ENCODE measurements at regions of chr3 and their contacts with region 1.

Region 1: GRCh38 chr3:120558771-120559241 is 37.3 kb upstream of the NDUFB4 start:
- DNase-seq: peak; percentile 84
- H3K4me3 Mint-ChIP-seq: peak overlapping the region; percentile 78
- H3K27ac Mint-ChIP-seq: peak overlapping the region; percentile 92
- H3K4me1 Mint-ChIP-seq: peaks cover 22% of the 10 kb centered on the region
- H3K27me3 Mint-ChIP-seq: no peaks in the 10 kb centered on the region
- CTCF ChIP-seq: peak; percentile 97

Region 2: DNA sequence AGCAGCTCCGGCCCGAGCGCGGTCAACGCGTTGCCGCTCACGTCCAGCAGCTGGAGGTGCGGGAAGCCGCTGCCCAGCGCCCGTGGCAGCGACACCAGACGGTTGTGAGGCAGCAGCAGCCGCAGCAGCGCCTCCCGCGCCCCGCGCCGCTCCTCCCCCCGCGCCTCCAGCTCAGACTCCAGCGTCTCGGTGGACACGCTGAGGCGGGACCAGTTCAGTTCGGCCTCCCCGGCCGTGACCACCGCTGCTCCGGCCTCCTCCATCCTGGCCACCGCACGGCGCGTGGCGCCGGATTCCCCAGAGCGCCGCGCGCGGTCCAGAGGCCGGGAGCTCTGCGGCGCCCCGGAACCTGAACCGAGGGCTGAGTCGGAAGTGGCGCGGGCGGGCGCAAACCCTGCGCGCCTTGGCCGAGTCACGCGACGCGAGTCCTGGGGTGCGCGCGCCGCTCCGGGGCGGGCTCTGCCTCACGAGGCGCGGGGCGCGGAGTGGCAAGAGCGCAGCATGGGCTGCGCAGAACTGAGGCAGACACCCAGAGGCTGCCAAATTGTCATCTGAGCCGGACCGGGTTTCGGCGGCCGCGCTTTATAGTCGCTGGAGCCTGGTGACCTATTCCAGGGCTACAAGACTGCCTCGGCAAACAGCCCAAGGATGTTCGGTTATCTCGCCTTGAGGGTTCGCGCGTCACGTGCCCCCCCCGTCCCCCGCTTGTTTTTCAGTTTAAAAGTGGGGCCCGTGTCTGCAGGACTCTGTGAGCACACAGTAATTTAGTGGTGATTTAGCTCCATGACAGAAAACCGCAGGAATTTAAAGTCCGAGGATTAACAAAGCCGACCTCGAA is 209.6 kb before region 1 on chr3 and contains the start of gene LRRC58:
- CTCF ChIA-PET with region 1: interaction called, 5 read pairs
- POLR2A ChIA-PET with region 1: interaction called, 8 read pairs
- intact Hi-C with region 1: loop called (anchors 2 kb)
- DNase-seq: peak; percentile 95
- H3K4me3 Mint-ChIP-seq: peak within 1 kb of the TSS; percentile 77
- H3K27ac Mint-ChIP-seq: peak within 1 kb of the TSS; percentile 83
- H3K4me1 Mint-ChIP-seq: peaks cover 34% of the 10 kb centered on the region
- H3K27me3 Mint-ChIP-seq: no peaks in the 10 kb centered on the region
- CTCF ChIP-seq: peak; percentile 8
- total RNA-seq, gene LRRC58: 25.8 and 28.8 TPM in 2 replicates

Region 3: GRCh38 chr3:120438665-120439370 is 120.0 kb before region 1 on chr3:
- CTCF ChIA-PET with region 1: interaction called, 10 read pairs
- POLR2A ChIA-PET with region 1: interaction called, 3 read pairs
- intact Hi-C with region 1: no loop called
- DNase-seq: no peak
- H3K4me3 Mint-ChIP-seq: no peak overlapping the region
- H3K27ac Mint-ChIP-seq: no peak overlapping the region
- H3K4me1 Mint-ChIP-seq: peaks cover 16% of the 10 kb centered on the region
- H3K27me3 Mint-ChIP-seq: no peaks in the 10 kb centered on the region
- CTCF ChIP-seq: no peak

Region 4: DNA sequence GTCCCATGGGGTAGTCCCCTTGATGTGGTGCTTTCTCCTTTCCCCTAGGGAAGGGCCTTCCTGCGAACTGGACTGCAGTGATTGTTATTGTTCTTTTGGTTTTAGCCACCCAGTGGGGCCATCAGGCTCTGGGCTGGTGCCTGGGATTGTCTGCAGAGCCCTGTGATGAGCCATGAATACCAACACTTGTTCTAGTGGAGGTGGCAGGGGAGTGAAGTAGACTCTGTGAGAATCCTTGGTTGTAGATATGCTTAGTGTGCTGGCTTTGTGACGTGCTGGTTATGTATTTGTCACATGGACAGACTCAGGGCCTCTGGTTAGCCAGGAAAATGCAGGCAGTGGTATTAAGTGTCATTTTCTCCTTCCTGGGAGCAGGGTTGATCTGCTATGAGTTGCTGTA is 14.4 kb before region 1 on chr3:
- CTCF ChIA-PET with region 1: interaction called, 39 read pairs
- POLR2A ChIA-PET with region 1: no interaction called
- intact Hi-C with region 1: no loop called
- DNase-seq: no peak
- H3K4me3 Mint-ChIP-seq: no peak overlapping the region
- H3K27ac Mint-ChIP-seq: no peak overlapping the region
- H3K4me1 Mint-ChIP-seq: no peaks in the 10 kb centered on the region
- H3K27me3 Mint-ChIP-seq: no peaks in the 10 kb centered on the region
- CTCF ChIP-seq: no peak

Region 5: DNA sequence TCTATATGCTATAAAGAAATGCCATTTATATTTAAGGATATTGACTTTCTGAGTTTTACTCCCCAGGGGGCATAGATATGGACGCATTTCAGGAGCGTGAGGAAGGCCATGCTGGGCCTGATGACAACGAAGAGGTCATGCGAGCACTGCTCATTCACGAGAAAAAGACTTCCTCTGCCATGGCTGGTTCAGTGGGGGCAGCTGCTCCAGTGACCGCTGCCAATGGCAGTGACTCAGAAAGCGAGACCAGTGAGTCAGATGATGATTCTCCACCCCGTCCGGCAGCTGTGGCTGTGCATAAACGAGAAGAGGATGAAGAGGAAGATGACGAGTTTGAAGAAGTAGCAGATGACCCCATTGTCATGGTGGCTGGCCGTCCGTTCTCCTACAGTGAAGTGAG is 222.2 kb after region 1 on chr3:
- CTCF ChIA-PET with region 1: interaction called, 16 read pairs
- POLR2A ChIA-PET with region 1: no interaction called
- intact Hi-C with region 1: no loop called
- DNase-seq: peak; percentile 84
- H3K4me3 Mint-ChIP-seq: peak overlapping the region; percentile 12
- H3K27ac Mint-ChIP-seq: peak overlapping the region; percentile 49
- H3K4me1 Mint-ChIP-seq: peaks cover 12% of the 10 kb centered on the region
- H3K27me3 Mint-ChIP-seq: no peaks in the 10 kb centered on the region
- CTCF ChIP-seq: no peak

Region 6: DNA sequence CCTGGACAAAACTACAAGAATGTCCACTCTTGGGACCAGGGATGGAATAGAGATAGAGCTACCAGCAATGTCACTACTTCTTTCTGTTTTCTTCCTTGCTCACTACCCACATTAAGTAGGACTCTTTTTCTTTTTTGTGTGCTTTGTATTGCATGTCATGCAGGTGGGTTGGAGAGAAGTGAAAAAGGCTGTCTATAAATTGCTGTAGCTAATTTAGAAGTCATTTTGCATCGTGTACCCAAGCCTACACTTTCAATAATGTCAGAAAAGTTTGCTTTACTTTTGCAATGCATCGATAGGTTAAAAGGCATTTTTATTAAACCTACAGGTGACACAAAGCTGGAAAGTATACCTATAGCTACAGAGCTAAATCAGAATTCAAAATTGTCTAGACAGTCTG is 242.7 kb after region 1 on chr3:
- CTCF ChIA-PET with region 1: interaction called, 12 read pairs
- POLR2A ChIA-PET with region 1: no interaction called
- intact Hi-C with region 1: no loop called
- DNase-seq: no peak
- H3K4me3 Mint-ChIP-seq: no peak overlapping the region
- H3K27ac Mint-ChIP-seq: no peak overlapping the region
- H3K4me1 Mint-ChIP-seq: no peaks in the 10 kb centered on the region
- H3K27me3 Mint-ChIP-seq: peaks cover 10% of the 10 kb centered on the region
- CTCF ChIP-seq: no peak